ENCODE measurements at regions of chr3 and their contacts with region 1.

Region 1: DNA sequence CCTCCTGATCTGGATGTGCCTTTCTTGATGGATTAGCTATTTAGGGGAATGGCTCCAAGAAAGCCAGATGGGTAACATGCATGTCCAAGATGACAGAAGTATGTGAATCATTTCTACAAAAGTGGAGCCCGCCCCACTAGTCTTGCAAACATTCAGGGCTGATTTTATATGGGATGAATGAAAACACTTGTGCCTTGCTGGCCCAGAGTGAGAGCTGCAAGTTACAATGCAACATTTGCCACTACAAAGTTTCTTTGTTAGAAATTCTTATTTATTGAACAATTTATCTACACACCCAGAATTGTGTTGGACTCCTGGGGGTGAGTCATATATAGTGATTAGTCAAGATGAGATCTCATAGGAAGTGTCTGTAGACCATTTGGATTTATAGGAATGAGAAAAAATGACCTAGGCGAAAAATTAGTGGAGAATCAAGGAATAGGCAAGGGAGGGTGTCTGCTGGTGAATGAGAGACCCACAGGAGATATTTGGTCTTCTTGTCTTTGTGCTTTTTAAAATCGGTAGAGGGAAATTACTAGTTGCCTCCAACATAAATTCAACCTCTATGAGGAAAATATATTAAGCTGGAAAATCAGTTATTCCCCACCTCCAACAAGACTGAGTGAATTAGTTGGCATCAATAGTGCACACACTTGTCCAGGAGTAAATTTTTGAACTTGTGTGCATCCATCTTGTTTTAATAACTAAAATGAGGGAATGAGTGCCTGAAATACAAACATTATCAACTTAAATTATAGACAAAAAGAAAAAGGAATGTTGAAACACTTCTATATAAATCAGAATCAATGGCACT is 53.5 kb upstream of the DCBLD2 start:
- DNase-seq: peak; percentile 50
- ATAC-seq: peak; percentile 21
- H3K4me3 ChIP-seq: no peak overlapping the region
- H3K27ac ChIP-seq: no peak overlapping the region
- H3K4me1 ChIP-seq: peaks cover 6% of the 10 kb centered on the region; the same call in 1 of the 2 replicates
- H3K27me3 ChIP-seq: no peaks in the 10 kb centered on the region
- CTCF ChIP-seq: no peak
- POLR2A ChIP-seq: no peak
- RAD21 ChIP-seq: no peak

Region 2: DNA sequence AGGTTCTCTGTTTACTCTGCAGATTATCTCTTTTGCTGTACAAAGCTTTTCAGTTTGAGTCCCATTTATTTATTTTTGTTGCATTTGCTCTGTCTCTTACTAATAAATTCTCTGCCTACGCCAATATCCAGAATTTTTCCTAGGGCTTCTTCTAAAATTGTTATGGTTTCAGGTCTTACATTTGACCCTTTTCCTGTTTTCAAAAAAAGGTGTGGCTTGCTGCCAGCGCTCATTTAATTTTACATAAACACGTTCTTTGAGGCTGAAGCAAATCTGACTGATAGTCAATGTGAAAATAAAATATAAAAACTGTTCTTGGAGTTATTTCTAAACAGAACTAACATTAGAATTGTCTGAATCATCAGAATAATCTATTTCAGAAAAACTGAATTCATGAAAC is 85.6 kb before region 1 on chr3:
- CTCF ChIA-PET with region 1: no interaction called
- POLR2A ChIA-PET with region 1: no interaction called
- dilution Hi-C with region 1: no loop called
- in situ Hi-C with region 1: no loop called
- intact Hi-C with region 1: no loop called
- DNase-seq: no peak
- ATAC-seq: no peak
- H3K4me3 ChIP-seq: no peak overlapping the region
- H3K27ac ChIP-seq: no peak overlapping the region
- H3K4me1 ChIP-seq: no peaks in the 10 kb centered on the region
- H3K27me3 ChIP-seq: no peaks in the 10 kb centered on the region
- CTCF ChIP-seq: no peak
- POLR2A ChIP-seq: no peak
- RAD21 ChIP-seq: no peak

Region 3: DNA sequence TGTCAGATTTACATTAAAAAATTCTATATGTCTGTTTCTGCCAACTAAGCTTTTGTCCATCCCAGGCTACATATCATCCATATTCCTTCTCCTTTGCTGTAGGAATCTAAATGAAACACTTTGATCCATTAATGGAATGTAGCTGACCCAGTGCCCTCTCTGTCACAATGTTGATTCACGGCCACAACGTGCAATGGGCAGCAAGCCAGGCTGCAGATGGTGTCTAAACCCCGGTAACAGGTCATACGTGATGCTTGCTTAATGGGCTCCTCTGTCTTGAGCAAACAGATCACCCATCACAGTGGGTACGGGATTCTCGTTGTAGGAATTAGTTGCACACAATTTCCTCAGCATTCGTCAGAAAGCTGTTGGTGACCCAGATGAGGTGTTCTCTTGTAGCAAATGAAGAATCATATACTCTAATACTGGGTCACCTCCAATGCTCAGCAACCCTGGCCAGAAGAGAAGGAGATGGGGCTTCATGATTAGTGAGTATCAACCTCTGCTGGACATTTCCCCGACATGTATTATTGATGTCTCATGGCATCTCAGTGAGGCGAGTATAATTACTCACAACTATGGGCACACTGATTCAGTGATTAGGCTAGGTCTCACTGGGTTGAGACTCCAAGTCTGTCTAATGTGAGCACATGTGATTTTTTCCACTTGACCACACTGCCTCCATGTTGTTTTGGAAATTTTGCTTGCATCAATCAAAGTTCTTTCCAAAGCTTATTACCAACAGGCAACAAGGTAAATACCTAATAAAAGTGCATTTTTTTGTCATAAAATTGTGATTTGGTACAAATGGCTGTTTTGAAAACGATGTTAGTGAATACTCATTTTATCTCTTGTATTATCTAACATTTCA is 40.6 kb before region 1 on chr3:
- CTCF ChIA-PET with region 1: no interaction called
- POLR2A ChIA-PET with region 1: no interaction called
- dilution Hi-C with region 1: no loop called
- in situ Hi-C with region 1: no loop called
- intact Hi-C with region 1: loop called (anchors 5 kb)
- DNase-seq: no peak
- ATAC-seq: no peak
- H3K4me3 ChIP-seq: no peak overlapping the region
- H3K27ac ChIP-seq: no peak overlapping the region
- H3K4me1 ChIP-seq: peaks cover 7% of the 10 kb centered on the region
- H3K27me3 ChIP-seq: no peaks in the 10 kb centered on the region
- CTCF ChIP-seq: no peak
- POLR2A ChIP-seq: no peak
- RAD21 ChIP-seq: no peak

Region 4: GRCh38 chr3:99808151-99808794 is 853.3 kb after region 1 on chr3:
- CTCF ChIA-PET with region 1: no interaction called
- POLR2A ChIA-PET with region 1: no interaction called
- dilution Hi-C with region 1: no loop called
- in situ Hi-C with region 1: no loop called
- intact Hi-C with region 1: no loop called
- DNase-seq: peak; percentile 84
- ATAC-seq: peak; percentile 90
- H3K4me3 ChIP-seq: no peak overlapping the region
- H3K27ac ChIP-seq: no peak overlapping the region
- H3K4me1 ChIP-seq: no peaks in the 10 kb centered on the region
- H3K27me3 ChIP-seq: no peaks in the 10 kb centered on the region
- CTCF ChIP-seq: peak; percentile 80
- POLR2A ChIP-seq: no peak
- RAD21 ChIP-seq: peak; percentile 79